Activated T-helper 1 cell treated with anti-CD3 and anti-CD28 coated beads, Interleukin-12 subunit alpha, Interleukin-12 subunit beta, Interleukin-2, Interleukin-4 antibody, amounts not matched to agents 30 ng/mL and 10 ng/mL and 1 ng/mL, durations not matched to agents 14 hours and 24 hours and 36 hours (primary cell): ENCODE measurements at regions of chr17 and their contacts with region 1.

Region 1: DNA sequence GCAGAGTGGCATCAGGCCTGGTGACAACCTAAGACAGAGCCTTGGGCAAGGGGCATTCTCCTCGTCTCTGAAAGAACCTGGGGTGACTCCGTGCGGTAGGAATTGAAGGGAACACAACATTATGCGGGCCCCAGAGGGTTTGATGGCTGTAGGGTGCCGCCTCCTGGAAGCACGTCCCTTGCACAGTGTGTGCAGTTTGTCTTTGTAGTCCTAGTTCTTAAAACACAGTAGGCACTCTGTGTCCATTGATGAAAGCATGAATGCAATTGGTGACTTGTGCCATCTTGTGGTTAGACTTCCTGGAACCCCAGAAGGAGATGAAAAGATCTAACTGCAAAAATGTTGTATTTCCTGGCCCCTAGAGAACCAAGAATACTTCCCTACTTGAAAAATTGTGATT is 279.8 kb downstream of the UTP18 start:
- DNase-seq: no peak
- H3K4me3 Mint-ChIP-seq: no peak overlapping the region
- H3K27ac Mint-ChIP-seq: no peak overlapping the region
- H3K4me1 Mint-ChIP-seq: no peaks in the 10 kb centered on the region
- H3K27me3 Mint-ChIP-seq: no peaks in the 10 kb centered on the region

Region 2: DNA sequence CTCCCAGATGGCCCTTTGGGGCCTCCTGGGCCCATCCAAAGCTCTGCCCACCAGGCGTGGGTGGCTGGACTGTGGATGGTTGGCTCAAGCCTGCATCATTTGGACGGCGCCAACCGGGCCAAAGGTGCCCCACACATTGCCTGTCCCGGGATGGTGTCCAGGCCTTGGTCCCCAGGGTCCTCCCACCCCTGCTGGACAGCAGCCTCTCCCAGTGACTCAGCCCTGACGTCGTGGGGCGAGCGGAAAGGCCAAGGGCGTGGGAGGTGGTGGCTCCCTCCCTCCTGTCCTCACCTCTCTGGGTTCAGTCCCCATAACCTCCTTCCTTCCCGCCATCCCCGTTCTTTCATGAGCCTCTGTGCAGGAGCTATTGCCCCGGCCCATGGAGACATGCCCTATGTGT is 1613.3 kb before region 1 on chr17:
- intact Hi-C with region 1: no loop called
- DNase-seq: no peak
- H3K4me3 Mint-ChIP-seq: no peak overlapping the region
- H3K27ac Mint-ChIP-seq: no peak overlapping the region
- H3K4me1 Mint-ChIP-seq: no peaks in the 10 kb centered on the region
- H3K27me3 Mint-ChIP-seq: peaks cover 8% of the 10 kb centered on the region

Region 3: DNA sequence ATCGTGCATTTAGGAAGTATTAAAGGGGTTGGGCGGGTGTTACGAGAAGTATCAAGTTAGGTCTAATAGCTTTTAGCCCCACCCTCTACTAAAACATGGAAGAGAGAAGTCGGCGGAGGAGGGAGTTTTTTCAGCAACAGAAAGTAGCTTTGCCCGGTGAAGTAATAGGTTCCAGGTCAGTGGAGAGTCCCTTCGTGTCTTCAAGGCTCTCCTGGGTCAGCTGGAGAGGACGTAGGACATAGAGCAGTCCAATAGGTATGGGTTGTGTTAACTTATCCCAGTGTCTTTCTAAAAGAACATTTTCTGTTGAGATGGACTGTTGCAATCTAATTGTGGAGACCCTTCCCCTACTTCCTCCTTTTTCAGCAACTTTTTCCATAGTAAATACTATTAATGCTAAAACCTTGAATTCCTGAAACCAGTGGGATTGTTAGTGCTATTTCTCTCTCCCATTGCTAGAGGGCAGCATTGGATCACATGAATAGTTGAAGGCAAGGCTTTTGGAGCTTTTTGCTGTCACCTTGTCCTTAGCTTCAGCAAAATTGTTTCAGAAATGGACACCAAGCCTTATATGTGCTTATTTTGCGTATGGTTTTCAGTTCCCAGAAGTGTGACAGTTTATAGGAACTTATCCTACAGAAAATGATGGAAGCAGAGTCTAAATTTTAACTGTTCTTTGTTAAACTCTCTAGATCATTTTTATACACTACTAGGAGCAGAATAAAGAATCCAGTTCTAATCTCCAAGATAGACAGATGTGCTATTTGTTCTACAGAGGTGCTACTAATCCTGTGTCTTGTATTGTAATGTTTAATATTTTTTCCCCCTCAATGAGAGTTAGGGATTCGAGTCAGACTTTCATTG is 241.4 kb before region 1 on chr17:
- intact Hi-C with region 1: loop called (anchors 2 kb)
- DNase-seq: no peak
- H3K4me3 Mint-ChIP-seq: no peak overlapping the region
- H3K27ac Mint-ChIP-seq: no peak overlapping the region
- H3K4me1 Mint-ChIP-seq: peaks cover 8% of the 10 kb centered on the region
- H3K27me3 Mint-ChIP-seq: peaks cover 2% of the 10 kb centered on the region

Region 4: DNA sequence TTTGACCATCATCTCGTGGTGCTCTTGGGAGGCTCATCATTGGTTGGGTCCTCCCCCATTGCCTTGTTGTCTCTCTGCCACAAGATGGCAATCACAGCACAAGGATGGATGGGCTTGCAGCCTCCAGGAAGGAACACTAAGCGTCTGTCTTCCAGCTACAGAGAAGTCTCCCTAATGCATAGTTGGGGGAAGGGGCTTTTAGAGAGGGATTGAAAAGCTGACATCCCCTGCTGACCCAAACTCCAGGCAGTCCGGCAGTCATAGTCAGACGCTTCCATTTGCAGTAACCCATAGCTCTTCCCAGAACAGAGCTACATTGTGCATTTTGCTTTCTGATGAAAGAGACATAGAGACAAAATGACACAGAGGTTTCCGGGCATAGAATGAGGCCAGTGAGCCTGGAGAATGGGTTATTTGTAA is 168.4 kb before region 1 on chr17:
- intact Hi-C with region 1: loop called (anchors 1 kb)
- DNase-seq: peak; percentile 16
- H3K4me3 Mint-ChIP-seq: no peak overlapping the region
- H3K27ac Mint-ChIP-seq: no peak overlapping the region
- H3K4me1 Mint-ChIP-seq: peaks cover 8% of the 10 kb centered on the region
- H3K27me3 Mint-ChIP-seq: peaks cover 1% of the 10 kb centered on the region

Region 5: DNA sequence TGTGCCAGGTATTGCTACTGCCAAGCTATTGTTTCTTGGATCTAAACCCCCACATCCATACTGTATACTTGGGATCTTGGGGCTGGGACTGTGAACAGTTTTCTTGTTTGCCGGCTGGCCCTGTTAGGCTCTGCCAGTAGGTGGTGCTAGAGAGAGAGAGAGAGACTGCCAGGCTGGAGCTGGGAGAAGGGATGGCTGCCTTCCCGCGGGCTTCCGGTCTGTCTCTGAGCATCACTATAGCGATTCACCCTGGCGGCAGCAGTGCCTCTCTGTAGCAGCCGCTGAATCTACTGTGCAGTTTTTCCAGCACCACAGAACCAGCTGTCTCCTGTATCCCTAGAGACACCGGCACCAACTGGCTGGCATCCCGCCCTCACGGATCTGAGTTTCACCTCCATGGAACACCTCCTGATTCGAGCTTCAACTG is 78.6 kb before region 1 on chr17:
- intact Hi-C with region 1: loop called (anchors 1 kb)
- DNase-seq: peak; percentile 48
- H3K4me3 Mint-ChIP-seq: no peak overlapping the region
- H3K27ac Mint-ChIP-seq: no peak overlapping the region
- H3K4me1 Mint-ChIP-seq: no peaks in the 10 kb centered on the region
- H3K27me3 Mint-ChIP-seq: peaks cover 4% of the 10 kb centered on the region